Activated CD4-positive, alpha-beta memory T cell treated with anti-CD3 and anti-CD28 coated beads for 36 hours (primary cell): ENCODE measurements at regions of chr6 and their contacts with region 1.

Region 1: DNA sequence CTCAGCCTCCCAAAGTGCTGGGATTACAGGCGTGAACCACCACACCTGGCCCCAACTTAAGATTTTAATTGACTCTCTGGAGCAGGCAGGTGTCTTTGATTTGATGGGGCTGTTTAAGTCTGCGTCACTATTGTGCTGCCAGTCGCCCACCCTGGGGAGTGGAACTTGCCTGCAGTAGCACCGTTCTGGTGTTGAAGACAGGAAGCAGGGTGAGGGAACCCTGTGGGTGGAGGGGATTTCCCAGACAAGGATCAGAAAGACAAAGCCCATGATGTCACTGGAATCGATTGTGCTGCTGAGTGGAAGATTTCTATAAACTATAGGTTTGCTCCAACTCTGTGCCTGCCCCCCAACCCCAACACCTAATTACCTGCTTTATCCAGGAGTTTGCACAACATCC is 11.0 kb downstream of the ALDH8A1 start:
- DNase-seq: peak; percentile 87
- H3K4me3 Mint-ChIP-seq: no peak overlapping the region
- H3K27ac Mint-ChIP-seq: no peak overlapping the region
- H3K4me1 Mint-ChIP-seq: peaks cover 20% of the 10 kb centered on the region
- H3K27me3 Mint-ChIP-seq: no peaks in the 10 kb centered on the region

Region 2: DNA sequence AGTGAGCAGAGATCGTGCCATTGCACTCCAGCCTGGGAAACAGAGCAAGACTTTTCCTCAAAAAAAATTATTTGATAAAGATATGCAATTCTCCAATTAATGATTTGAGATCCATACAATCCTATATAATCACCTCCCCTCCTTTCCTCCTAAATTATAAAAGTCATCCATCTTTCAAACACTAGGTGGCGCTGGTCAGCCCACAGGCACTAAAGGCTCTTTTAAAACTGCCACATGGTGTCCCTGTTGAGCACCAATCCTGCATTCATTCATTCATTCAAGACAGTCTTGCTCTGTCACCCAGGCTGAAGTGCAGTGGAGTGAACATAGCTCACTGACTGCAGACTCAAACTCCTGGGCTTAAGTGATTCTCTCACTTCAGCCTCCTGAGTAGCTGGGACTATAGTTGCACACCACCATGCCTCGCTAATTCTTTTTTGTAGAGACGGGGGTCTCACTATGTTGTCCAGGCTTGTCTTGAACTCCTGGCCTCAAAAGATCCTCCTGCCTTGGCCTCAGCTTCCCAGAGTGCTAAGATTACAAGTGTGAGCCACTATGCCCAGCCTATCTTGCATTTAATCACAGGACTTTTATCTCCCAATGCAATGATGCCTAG is 827.7 kb before region 1 on chr6:
- CTCF ChIA-PET with region 1: interaction called, 28 read pairs
- POLR2A ChIA-PET with region 1: no interaction called
- intact Hi-C with region 1: loop called (anchors 2 kb)
- DNase-seq: peak; percentile 50
- H3K4me3 Mint-ChIP-seq: no peak overlapping the region
- H3K27ac Mint-ChIP-seq: no peak overlapping the region
- H3K4me1 Mint-ChIP-seq: no peaks in the 10 kb centered on the region
- H3K27me3 Mint-ChIP-seq: peaks cover 8% of the 10 kb centered on the region

Region 3: GRCh38 chr6:134161036-134161435 is 777.9 kb before region 1 on chr6:
- CTCF ChIA-PET with region 1: interaction called, 56 read pairs
- POLR2A ChIA-PET with region 1: no interaction called
- intact Hi-C with region 1: loop called (anchors 5 kb)
- DNase-seq: no peak
- H3K4me3 Mint-ChIP-seq: no peak overlapping the region
- H3K27ac Mint-ChIP-seq: no peak overlapping the region
- H3K4me1 Mint-ChIP-seq: peaks cover 4% of the 10 kb centered on the region
- H3K27me3 Mint-ChIP-seq: no peaks in the 10 kb centered on the region

Region 4: GRCh38 chr6:134809132-134809531 is 129.8 kb before region 1 on chr6:
- CTCF ChIA-PET with region 1: no interaction called
- POLR2A ChIA-PET with region 1: no interaction called
- intact Hi-C with region 1: no loop called
- DNase-seq: no peak
- H3K4me3 Mint-ChIP-seq: no peak overlapping the region
- H3K27ac Mint-ChIP-seq: no peak overlapping the region
- H3K4me1 Mint-ChIP-seq: no peaks in the 10 kb centered on the region
- H3K27me3 Mint-ChIP-seq: peaks cover 5% of the 10 kb centered on the region

Region 5: GRCh38 chr6:134822920-134823709 is 115.8 kb before region 1 on chr6:
- CTCF ChIA-PET with region 1: interaction called, 32 read pairs
- POLR2A ChIA-PET with region 1: no interaction called
- intact Hi-C with region 1: loop called (anchors 2 kb)
- DNase-seq: peak; percentile 29
- H3K4me3 Mint-ChIP-seq: no peak overlapping the region
- H3K27ac Mint-ChIP-seq: no peak overlapping the region
- H3K4me1 Mint-ChIP-seq: no peaks in the 10 kb centered on the region
- H3K27me3 Mint-ChIP-seq: peaks cover 3% of the 10 kb centered on the region

Region 6: GRCh38 chr6:134882426-134883038 is 56.4 kb before region 1 on chr6:
- CTCF ChIA-PET with region 1: interaction called, 41 read pairs
- POLR2A ChIA-PET with region 1: no interaction called
- intact Hi-C with region 1: loop called (anchors 1 kb)
- DNase-seq: peak; percentile 74
- H3K4me3 Mint-ChIP-seq: no peak overlapping the region
- H3K27ac Mint-ChIP-seq: no peak overlapping the region
- H3K4me1 Mint-ChIP-seq: no peaks in the 10 kb centered on the region
- H3K27me3 Mint-ChIP-seq: peaks cover 18% of the 10 kb centered on the region

Region 7: GRCh38 chr6:134921721-134922261 is 17.1 kb before region 1 on chr6:
- CTCF ChIA-PET with region 1: interaction called, 20 read pairs
- POLR2A ChIA-PET with region 1: no interaction called
- intact Hi-C with region 1: no loop called
- DNase-seq: no peak
- H3K4me3 Mint-ChIP-seq: no peak overlapping the region
- H3K27ac Mint-ChIP-seq: no peak overlapping the region
- H3K4me1 Mint-ChIP-seq: no peaks in the 10 kb centered on the region
- H3K27me3 Mint-ChIP-seq: no peaks in the 10 kb centered on the region

Region 8: GRCh38 chr6:135085700-135086413 is 147.0 kb after region 1 on chr6:
- CTCF ChIA-PET with region 1: no interaction called
- POLR2A ChIA-PET with region 1: no interaction called
- intact Hi-C with region 1: no loop called
- DNase-seq: no peak
- H3K4me3 Mint-ChIP-seq: peak overlapping the region; percentile 38
- H3K27ac Mint-ChIP-seq: peak overlapping the region; percentile 40
- H3K4me1 Mint-ChIP-seq: peaks cover 59% of the 10 kb centered on the region
- H3K27me3 Mint-ChIP-seq: no peaks in the 10 kb centered on the region

Region 9: DNA sequence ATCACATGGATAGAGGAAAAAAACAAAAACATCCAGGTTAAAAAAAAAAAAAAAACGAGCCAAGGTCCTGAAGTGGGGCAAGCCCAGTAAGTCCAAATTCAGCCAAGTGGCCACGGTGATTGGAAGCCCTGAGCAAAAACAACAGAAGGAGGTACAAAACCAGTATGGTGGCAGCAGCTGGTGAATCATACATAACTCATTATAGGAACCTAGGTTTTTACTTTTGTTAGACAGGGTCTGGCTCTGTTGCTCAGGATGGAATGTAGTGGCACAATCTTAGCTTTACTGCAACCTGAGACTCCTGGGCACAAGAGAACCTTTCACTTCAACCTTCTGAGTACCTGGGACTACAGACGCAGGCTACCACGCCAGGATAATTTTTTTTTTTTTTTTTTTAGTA is 219.5 kb after region 1 on chr6:
- CTCF ChIA-PET with region 1: no interaction called
- POLR2A ChIA-PET with region 1: no interaction called
- intact Hi-C with region 1: no loop called
- DNase-seq: peak; percentile 42
- H3K4me3 Mint-ChIP-seq: no peak overlapping the region
- H3K27ac Mint-ChIP-seq: no peak overlapping the region
- H3K4me1 Mint-ChIP-seq: peaks cover 50% of the 10 kb centered on the region
- H3K27me3 Mint-ChIP-seq: peaks cover 3% of the 10 kb centered on the region

Region 10: GRCh38 chr6:135651964-135652755 is 713.3 kb after region 1 on chr6:
- CTCF ChIA-PET with region 1: no interaction called
- POLR2A ChIA-PET with region 1: no interaction called
- intact Hi-C with region 1: no loop called
- DNase-seq: no peak
- H3K4me3 Mint-ChIP-seq: no peak overlapping the region
- H3K27ac Mint-ChIP-seq: no peak overlapping the region
- H3K4me1 Mint-ChIP-seq: peaks cover 14% of the 10 kb centered on the region
- H3K27me3 Mint-ChIP-seq: no peaks in the 10 kb centered on the region